ENCODE measurements at regions of chr15 and their contacts with region 1.

Region 1: GRCh38 chr15:101333401-101333800 is 38.4 kb upstream of the SNRPA1 start:
- DNase-seq: no peak
- ATAC-seq: no peak
- H3K4me3 Mint-ChIP-seq: no peak overlapping the region
- H3K27ac Mint-ChIP-seq: peak overlapping the region; percentile 75
- H3K4me1 Mint-ChIP-seq: peaks cover 14% of the 10 kb centered on the region
- H3K27me3 Mint-ChIP-seq: no peaks in the 10 kb centered on the region

Region 2: GRCh38 chr15:101320501-101321052 is 12.8 kb before region 1 on chr15:
- CTCF ChIA-PET with region 1: interaction called, 5 read pairs
- POLR2A ChIA-PET with region 1: interaction called, 3 read pairs
- intact Hi-C with region 1: loop called in 1 of 2 experiments (anchors 1 kb)
- DNase-seq: peak; percentile 82
- ATAC-seq: peak; percentile 98
- H3K4me3 Mint-ChIP-seq: peak overlapping the region; percentile 61
- H3K27ac Mint-ChIP-seq: peak overlapping the region; percentile 64
- H3K4me1 Mint-ChIP-seq: peaks cover 9% of the 10 kb centered on the region
- H3K27me3 Mint-ChIP-seq: no peaks in the 10 kb centered on the region